ENCODE measurements at regions of chr19 and their contacts with region 1.

Region 1: DNA sequence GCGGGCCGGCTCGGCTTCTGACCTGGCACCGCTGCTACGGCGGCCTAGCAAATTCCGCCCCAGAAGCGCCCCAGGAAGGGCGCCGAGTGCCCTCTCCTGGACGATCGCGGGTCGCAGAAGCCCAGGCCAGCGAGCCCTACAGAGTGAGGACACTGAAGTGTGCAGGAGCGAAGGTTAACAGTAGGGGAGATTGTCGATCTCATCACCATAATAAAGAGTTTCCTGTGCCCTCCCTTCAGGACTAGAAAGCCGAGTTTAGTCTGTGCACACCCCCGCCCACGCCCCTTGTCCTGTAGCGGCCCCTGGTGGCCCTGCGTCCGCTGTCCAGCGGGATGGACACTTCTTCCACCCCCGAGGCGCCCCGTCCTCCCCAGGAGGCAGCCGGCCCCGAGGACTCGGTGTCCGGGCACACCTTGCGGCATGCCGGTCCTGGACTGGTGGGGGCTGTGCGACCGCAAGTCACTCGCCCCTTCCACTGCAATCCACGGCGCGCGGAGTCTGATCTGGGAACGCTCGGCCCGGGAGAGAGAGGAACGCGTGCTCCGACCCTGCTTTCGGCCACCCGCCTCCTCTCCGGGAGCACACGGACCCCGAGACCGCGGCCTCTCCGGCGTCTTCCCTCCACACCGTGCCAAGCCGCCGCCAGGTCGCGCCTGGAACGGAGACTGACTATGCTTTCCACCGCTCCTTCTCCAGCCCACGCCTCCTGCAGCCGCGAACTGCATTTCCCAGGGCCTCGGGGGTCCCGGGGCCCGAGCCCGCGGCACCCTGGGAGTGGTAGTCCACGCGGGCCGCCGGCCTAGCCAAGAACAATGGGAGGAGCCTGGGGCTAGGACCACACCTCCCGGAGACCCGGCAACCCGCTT is 769 bp upstream of the KMT2B start:
- DNase-seq: peak; percentile 88
- ATAC-seq: peak; percentile 84
- H3K4me3 ChIP-seq: peak overlapping the region; percentile 89 to 94
- H3K27ac ChIP-seq: peak overlapping the region; percentile 85
- H3K4me1 ChIP-seq: peaks cover 16 to 31% of the 10 kb centered on the region in 2 experiments
- H3K27me3 ChIP-seq: no peaks in the 10 kb centered on the region
- CTCF ChIP-seq: peak; percentile 74 to 99 (median 87)
- POLR2A ChIP-seq: no peak
- RAD21 ChIP-seq: peak; percentile 90

Region 2: GRCh38 chr19:35352448-35353304 is 364.4 kb before region 1 on chr19:
- CTCF ChIA-PET with region 1: no interaction called
- POLR2A ChIA-PET with region 1: no interaction called
- RAD21 ChIA-PET with region 1: no interaction called
- intact Hi-C with region 1: loop called (anchors 10 kb)
- DNase-seq: peak; percentile 59
- ATAC-seq: peak; percentile 91
- H3K4me3 ChIP-seq: no peak overlapping the region
- H3K27ac ChIP-seq: no peak overlapping the region
- H3K4me1 ChIP-seq: peaks cover 0 to 7% of the 10 kb centered on the region in 2 experiments; a peak in 1 of 4 replicates
- H3K27me3 ChIP-seq: peaks cover 4% of the 10 kb centered on the region; the same call in 1 of the 2 replicates
- CTCF ChIP-seq: peak; percentile 85 to 92 (median 86)
- POLR2A ChIP-seq: no peak
- RAD21 ChIP-seq: peak; percentile 97

Region 3: GRCh38 chr19:35509861-35510625 is 207.0 kb before region 1 on chr19:
- CTCF ChIA-PET with region 1: no interaction called
- POLR2A ChIA-PET with region 1: no interaction called
- RAD21 ChIA-PET with region 1: no interaction called
- intact Hi-C with region 1: loop called (anchors 1 kb)
- DNase-seq: peak; percentile 82
- ATAC-seq: peak; percentile 81
- H3K4me3 ChIP-seq: peak overlapping the region; percentile 66 to 70
- H3K27ac ChIP-seq: peak overlapping the region; percentile 94
- H3K4me1 ChIP-seq: peaks cover 19 to 37% of the 10 kb centered on the region in 2 experiments
- H3K27me3 ChIP-seq: no peaks in the 10 kb centered on the region
- CTCF ChIP-seq: peak; percentile 95 to 96 (median 95)
- POLR2A ChIP-seq: peak; percentile 90
- RAD21 ChIP-seq: peak; percentile 73

Region 4: GRCh38 chr19:35545001-35545911 is 171.8 kb before region 1 on chr19 and contains the start of gene TMEM147:
- CTCF ChIA-PET with region 1: no interaction called
- POLR2A ChIA-PET with region 1: no interaction called
- RAD21 ChIA-PET with region 1: no interaction called
- intact Hi-C with region 1: loop called (anchors 2 kb)
- DNase-seq: peak; percentile 70
- ATAC-seq: peak; percentile 93
- H3K4me3 ChIP-seq: peak within 1 kb of the TSS; percentile 69 to 100
- H3K27ac ChIP-seq: peak within 1 kb of the TSS; percentile 89
- H3K4me1 ChIP-seq: peaks cover 9 to 22% of the 10 kb centered on the region in 2 experiments
- H3K27me3 ChIP-seq: no peaks in the 10 kb centered on the region
- CTCF ChIP-seq: no peak
- POLR2A ChIP-seq: peak; percentile 77
- RAD21 ChIP-seq: no peak
- total RNA-seq, gene TMEM147: 128 TPM

Region 5: DNA sequence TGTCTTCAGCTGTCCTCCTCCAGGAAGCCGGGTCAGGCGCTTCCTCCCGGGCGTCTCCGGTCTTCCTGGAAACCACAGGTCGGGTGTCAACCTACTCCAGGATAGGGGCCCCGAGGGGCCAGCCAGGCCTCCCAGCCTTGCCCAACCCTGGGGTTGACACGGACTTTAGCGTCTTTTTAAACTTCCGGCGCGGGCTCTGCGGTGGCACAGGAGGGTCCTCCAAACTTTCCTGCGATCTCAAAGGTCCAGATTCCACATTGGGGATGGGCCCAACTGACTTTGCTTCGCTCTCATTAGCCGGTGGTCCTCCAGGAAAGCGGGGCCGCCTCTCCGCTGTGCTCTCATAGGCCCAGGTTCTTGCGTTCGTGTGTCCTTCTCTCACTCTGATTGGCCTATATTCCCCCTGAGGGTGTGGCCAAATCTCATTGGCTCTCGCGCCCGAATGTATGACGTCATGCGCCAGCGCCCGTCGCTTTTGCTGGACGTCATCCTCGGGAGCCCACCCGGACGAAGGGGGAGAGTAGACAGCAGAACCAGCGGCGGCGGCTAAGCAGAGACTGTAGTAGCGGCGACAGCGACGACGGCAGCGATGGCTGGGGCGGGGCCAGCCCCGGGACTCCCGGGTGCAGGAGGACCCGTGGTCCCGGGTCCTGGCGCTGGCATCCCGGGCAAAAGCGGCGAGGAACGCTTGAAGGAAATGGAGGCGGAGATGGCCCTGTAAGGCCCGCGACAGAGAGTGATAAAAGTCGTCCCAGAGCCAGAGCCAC is 88.3 kb before region 1 on chr19 and contains the start of gene RBM42:
- CTCF ChIA-PET with region 1: no interaction called
- POLR2A ChIA-PET with region 1: no interaction called
- RAD21 ChIA-PET with region 1: no interaction called
- intact Hi-C with region 1: no loop called
- DNase-seq: peak; percentile 99
- ATAC-seq: peak; percentile 100
- H3K4me3 ChIP-seq: peak within 1 kb of the TSS; percentile 89 to 97
- H3K27ac ChIP-seq: peak within 1 kb of the TSS; percentile 73
- H3K4me1 ChIP-seq: peaks cover 7 to 9% of the 10 kb centered on the region in 2 experiments; a peak in 3 of 4 replicates
- H3K27me3 ChIP-seq: no peaks in the 10 kb centered on the region
- CTCF ChIP-seq: no peak
- POLR2A ChIP-seq: peak; percentile 21
- RAD21 ChIP-seq: no peak
- total RNA-seq, gene RBM42: 87.2 TPM

Region 6: DNA sequence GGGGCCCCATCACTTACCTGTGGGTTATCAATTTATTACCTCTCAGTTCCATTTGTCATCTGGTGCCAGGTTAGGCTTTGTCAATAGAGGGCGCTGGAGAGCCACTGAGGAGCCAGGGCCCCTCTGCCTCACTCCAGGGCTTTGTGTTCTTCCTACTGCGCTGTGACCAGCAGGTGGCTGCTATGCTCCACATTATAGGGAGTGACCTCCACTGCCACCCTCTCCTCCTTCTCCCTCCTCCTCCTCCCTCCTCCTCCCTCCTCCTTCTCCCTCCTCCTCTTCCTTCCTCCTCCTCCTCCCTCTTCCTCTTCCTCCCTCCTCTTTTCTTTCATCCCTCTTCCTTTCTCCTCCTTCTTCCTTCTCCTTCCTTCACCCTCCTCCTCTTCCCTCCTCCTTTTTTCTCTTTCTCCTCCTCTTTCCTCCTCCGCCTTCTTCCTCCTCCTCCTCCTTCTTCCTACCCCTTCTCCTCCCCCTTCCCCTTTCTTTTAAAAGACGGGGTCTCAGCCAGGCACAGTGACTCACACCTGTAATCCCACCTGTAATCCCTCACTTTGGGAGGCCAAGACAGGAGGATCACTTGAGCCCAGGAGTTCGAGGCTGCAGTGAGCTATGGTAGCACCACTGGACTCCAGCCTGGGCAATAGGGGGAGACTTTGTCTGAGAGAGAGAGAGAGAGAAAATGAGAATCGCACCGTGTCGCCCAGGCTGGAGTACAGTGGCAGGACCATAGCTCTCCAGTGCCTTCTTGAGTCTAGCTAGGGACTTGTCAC is 23.0 kb before region 1 on chr19:
- CTCF ChIA-PET with region 1: no interaction called
- POLR2A ChIA-PET with region 1: no interaction called
- RAD21 ChIA-PET with region 1: no interaction called
- intact Hi-C with region 1: loop called (anchors 1 kb)
- DNase-seq: peak; percentile 85
- ATAC-seq: peak; percentile 99
- H3K4me3 ChIP-seq: no peak overlapping the region
- H3K27ac ChIP-seq: no peak overlapping the region
- H3K4me1 ChIP-seq: peaks cover 5 to 9% of the 10 kb centered on the region in 2 experiments; a peak in 2 of 4 replicates
- H3K27me3 ChIP-seq: no peaks in the 10 kb centered on the region
- CTCF ChIP-seq: peak; percentile 98 to 99 (median 99)
- POLR2A ChIP-seq: no peak
- RAD21 ChIP-seq: peak; percentile 95

Region 7: GRCh38 chr19:35704218-35704617 is 12.8 kb before region 1 on chr19 and contains the start of gene ZBTB32:
- CTCF ChIA-PET with region 1: no interaction called
- POLR2A ChIA-PET with region 1: no interaction called
- RAD21 ChIA-PET with region 1: no interaction called
- intact Hi-C with region 1: no loop called
- DNase-seq: no peak
- ATAC-seq: no peak
- H3K4me3 ChIP-seq: no peak within 1 kb of the TSS
- H3K27ac ChIP-seq: no peak within 1 kb of the TSS
- H3K4me1 ChIP-seq: peaks cover 0 to 10% of the 10 kb centered on the region in 2 experiments; a peak in 2 of 4 replicates
- H3K27me3 ChIP-seq: no peaks in the 10 kb centered on the region
- CTCF ChIP-seq: no peak
- POLR2A ChIP-seq: no peak
- RAD21 ChIP-seq: no peak
- total RNA-seq, gene ZBTB32: not detected

Region 8: GRCh38 chr19:35775298-35776110 is 58.5 kb after region 1 on chr19 and contains the start of gene ARHGAP33:
- CTCF ChIA-PET with region 1: no interaction called
- POLR2A ChIA-PET with region 1: no interaction called
- RAD21 ChIA-PET with region 1: no interaction called
- intact Hi-C with region 1: no loop called
- DNase-seq: peak; percentile 95
- ATAC-seq: peak; percentile 95
- H3K4me3 ChIP-seq: peak within 1 kb of the TSS; percentile 65 to 67
- H3K27ac ChIP-seq: no peak within 1 kb of the TSS; the same call in 1 of the 2 replicates
- H3K4me1 ChIP-seq: peaks cover 9 to 16% of the 10 kb centered on the region in 2 experiments; a peak in 3 of 4 replicates
- H3K27me3 ChIP-seq: no peaks in the 10 kb centered on the region
- CTCF ChIP-seq: no peak
- POLR2A ChIP-seq: no peak
- RAD21 ChIP-seq: no peak
- total RNA-seq, gene ARHGAP33: 30.2 TPM

Region 9: DNA sequence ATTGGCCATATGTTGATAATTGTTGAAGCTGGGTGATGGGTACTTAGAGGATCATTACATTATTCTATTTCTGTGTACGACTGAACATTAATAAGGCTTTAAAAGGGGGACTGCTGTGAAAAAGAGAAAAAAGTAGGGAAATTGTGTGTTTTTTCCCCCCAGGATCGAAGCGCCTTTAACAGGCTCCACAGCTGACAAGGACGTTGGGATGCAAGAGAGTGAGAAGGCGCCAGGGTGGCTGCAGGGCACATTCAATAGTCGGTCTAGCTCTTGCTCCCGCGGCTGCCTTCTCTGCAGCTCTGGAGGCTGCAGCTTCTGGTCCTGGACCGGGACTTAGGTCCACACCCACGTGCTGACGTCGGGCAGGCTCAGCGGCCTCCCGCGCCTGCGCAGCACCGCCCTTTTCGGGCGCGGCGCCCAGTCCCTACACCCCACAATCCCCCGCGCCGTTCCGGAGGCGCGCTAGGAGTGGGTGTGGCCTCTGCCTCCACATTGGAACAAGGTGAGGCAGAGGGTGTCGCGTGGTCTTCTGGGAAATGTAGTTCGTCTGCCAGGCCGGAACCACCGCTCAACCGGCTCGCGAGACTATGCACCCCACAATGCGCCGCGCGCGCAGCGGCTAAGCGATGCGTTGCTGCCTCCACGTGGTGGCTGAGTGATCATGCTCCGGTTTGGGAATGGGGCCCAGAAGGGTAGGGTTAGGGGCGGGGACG is 214.3 kb after region 1 on chr19:
- CTCF ChIA-PET with region 1: interaction called, 4 read pairs
- POLR2A ChIA-PET with region 1: no interaction called
- RAD21 ChIA-PET with region 1: no interaction called
- intact Hi-C with region 1: loop called (anchors 1 kb)
- DNase-seq: peak; percentile 99
- ATAC-seq: peak; percentile 95
- H3K4me3 ChIP-seq: peak overlapping the region; percentile 36 to 48
- H3K27ac ChIP-seq: peak overlapping the region; percentile 55
- H3K4me1 ChIP-seq: peaks cover 10 to 22% of the 10 kb centered on the region in 2 experiments; a peak in 3 of 4 replicates
- H3K27me3 ChIP-seq: no peaks in the 10 kb centered on the region
- CTCF ChIP-seq: peak; percentile 73 to 96 (median 85)
- POLR2A ChIP-seq: peak; percentile 98
- RAD21 ChIP-seq: peak; percentile 100

Measured in HCT116 (cell line).